WTC11 (cell line): ENCODE measurements at regions of chr10 and their contacts with region 1.

Region 1: DNA sequence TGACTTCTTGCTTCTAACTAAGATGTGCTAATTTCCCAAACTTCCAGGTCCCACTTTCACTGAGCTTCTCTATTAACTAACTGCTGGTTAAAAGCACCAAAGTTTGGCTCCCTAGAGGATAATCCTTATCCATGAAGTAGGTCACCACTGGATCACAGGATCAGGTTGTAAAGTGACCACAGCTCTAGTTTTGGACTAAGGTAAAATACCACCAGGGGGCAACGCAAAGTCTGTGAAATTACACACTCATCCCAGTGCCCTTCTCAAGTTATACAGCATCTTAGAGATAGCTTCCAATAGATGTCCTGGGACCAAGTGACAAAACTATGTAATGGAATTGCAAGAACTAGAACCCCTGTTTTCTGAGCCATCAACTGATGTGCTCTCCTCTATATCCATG is 116.4 kb upstream of the ASAH2 start:
- DNase-seq: no peak
- ATAC-seq: peak; percentile 83
- H3K4me3 Mint-ChIP-seq: no peak overlapping the region
- H3K27ac Mint-ChIP-seq: no peak overlapping the region
- H3K4me1 Mint-ChIP-seq: peaks cover 11% of the 10 kb centered on the region
- H3K27me3 Mint-ChIP-seq: no peaks in the 10 kb centered on the region
- CTCF ChIP-seq: 0 out of 2 replicates have a peak, but pooled peaks have one; percentile 25

Region 2: GRCh38 chr10:50271564-50272250 is 96.0 kb before region 1 on chr10:
- CTCF ChIA-PET with region 1: no interaction called
- POLR2A ChIA-PET with region 1: no interaction called
- DNase-seq: no peak
- ATAC-seq: peak; percentile 81
- H3K4me3 Mint-ChIP-seq: no peak overlapping the region
- H3K27ac Mint-ChIP-seq: no peak overlapping the region
- H3K4me1 Mint-ChIP-seq: no peaks in the 10 kb centered on the region
- H3K27me3 Mint-ChIP-seq: peaks cover 6% of the 10 kb centered on the region
- CTCF ChIP-seq: no peak

Region 3: GRCh38 chr10:50347394-50347802 is 20.3 kb before region 1 on chr10:
- CTCF ChIA-PET with region 1: no interaction called
- POLR2A ChIA-PET with region 1: no interaction called
- DNase-seq: no peak
- ATAC-seq: no peak
- H3K4me3 Mint-ChIP-seq: no peak overlapping the region
- H3K27ac Mint-ChIP-seq: no peak overlapping the region
- H3K4me1 Mint-ChIP-seq: no peaks in the 10 kb centered on the region
- H3K27me3 Mint-ChIP-seq: no peaks in the 10 kb centered on the region
- CTCF ChIP-seq: no peak

Region 4: DNA sequence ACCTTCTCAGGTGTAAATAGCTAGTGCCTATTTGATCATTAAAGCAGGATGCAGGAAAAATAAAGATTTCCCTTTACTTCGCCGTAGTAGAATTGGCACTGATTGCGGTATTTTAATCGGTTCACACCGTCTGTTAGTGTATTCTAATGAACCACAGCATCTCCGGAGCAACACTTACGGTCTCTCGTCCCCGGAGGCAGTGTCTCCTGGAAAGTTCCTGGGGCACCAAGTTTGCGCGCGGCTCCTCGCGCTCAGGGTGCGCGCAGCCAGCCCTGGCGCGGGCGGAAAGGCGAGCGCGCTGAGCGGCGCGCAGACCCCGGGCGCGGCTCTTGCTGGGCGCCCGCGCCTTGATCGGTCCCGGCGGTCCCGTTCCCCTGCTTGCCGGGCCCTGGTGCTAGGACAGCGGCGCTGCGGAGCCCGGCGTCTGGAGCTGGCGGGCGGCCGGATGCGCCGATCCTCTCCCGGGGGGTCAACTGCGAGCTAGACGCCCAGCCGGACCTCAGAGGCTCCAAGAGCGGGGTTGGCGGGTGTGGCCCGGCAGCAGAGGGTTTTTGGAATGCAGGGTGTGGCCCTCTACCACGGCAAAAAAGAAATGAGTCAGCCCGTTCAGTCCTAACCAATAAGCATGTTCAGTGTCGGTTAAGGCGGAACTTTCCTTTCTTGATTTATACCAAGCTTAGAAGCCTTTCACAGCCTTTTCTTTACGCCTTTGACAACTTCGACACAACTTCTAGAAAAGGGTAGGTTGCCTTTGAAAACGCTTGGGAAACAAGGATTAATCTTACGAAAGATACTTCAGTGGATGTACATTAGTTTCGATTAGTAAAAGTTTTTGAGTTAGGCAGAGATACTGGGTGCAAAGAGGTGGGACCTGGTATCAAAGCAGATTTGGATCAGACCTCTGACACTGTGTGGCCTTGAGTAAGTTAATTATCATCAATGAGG is 50.4 kb after region 1 on chr10:
- CTCF ChIA-PET with region 1: interaction called, 29 read pairs
- POLR2A ChIA-PET with region 1: no interaction called
- DNase-seq: peak; percentile 73
- ATAC-seq: peak; percentile 84
- H3K4me3 Mint-ChIP-seq: peak overlapping the region; percentile 72
- H3K27ac Mint-ChIP-seq: peak overlapping the region; percentile 22; the same call in 1 of the 2 replicates
- H3K4me1 Mint-ChIP-seq: peaks cover 51% of the 10 kb centered on the region
- H3K27me3 Mint-ChIP-seq: no peaks in the 10 kb centered on the region
- CTCF ChIP-seq: no peak

Region 5: DNA sequence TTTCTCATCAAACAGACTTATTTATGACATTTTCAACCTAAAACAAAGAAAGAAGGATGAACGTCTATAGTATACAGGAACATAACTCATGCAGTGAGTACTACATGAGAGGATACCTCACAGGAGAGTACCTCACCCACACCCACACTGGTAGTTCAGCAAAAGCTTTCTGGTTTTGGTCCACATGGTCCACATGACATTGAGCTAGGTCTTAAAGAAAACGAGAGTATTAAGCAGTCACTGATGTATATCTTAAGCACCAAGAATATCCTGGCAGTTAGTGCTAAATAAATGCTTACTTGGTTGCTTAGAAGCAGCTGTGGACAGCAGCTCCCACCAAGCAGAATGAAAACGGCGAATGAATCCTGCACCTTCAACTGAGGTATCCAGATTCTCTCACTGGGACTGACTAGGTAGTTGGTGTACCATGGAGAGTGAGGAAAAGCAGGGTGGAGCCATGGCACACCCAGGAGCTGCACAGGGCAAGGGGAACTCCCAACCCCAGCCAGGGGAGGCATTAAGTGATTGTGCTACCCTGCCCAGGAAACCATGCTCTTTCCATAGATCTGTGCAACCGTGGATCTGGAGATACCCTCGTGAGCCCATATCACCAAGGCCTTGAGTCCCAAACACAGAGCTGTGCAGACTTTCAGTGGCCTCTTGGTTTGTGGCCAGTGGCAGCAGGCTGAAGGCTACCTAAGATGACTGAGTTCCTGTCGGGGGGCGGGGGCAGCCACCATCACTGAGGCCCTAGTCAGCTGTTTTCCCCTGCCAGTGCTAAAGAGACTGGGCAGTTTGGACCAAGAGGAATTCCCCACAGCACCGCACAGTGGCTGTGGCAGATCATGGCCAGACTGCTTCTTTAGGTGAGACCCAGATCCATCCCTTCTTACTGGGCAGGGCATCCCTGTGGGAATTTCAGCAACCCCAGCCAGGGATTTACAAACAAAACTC is 112.6 kb after region 1 on chr10:
- CTCF ChIA-PET with region 1: no interaction called
- POLR2A ChIA-PET with region 1: no interaction called
- DNase-seq: no peak
- ATAC-seq: peak; percentile 41
- H3K4me3 Mint-ChIP-seq: no peak overlapping the region
- H3K27ac Mint-ChIP-seq: no peak overlapping the region
- H3K4me1 Mint-ChIP-seq: peaks cover 12% of the 10 kb centered on the region
- H3K27me3 Mint-ChIP-seq: no peaks in the 10 kb centered on the region
- CTCF ChIP-seq: no peak